Activated CD4-positive, alpha-beta T cell treated with anti-CD3 and anti-CD28 coated beads for 36 hours (primary cell): ENCODE measurements at regions of chr20 and their contacts with region 1.

Region 1: DNA sequence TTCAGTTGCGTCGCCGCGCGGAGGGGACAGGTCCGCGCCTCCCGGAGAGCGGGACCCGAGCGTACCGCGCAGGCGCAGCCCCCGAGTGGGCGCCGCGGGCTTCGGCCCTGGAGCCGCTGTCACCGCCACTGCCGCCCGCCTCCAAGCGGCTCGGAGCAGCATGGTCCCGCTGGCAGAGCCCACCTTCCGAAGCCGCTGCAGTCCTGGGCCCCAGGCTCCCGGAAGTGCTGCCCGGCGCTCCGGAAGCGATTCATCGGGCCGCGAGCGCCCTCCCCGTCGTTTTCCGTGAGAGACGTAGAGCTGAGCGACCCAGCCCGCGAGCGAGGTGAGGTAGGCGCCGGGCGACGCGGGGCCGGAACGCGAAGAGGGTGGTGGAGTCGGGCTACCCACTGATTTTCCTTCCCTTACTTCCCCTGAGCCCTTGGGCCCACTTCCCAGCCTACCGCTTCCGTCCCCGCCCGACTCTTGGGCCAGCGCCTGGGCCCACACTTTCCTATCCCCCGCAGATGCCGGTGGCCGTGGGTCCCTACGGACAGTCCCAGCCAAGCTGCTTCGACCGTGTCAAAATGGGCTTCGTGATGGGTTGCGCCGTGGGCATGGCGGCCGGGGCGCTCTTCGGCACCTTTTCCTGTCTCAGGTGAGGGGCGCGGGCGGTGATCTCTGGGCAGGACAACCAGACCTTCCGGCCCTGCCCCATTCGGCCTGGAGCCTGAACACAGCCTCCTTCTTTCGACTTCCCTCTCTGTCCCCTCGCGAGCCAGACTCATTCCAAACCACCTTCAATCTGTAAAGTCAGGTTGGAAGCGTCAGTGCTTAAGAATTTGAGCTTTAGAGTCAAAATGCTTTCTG is at the starts of genes NFS1 and ROMO1:
- DNase-seq: peak; percentile 94
- ATAC-seq: peak; percentile 92
- H3K4me3 Mint-ChIP-seq: peak within 1 kb of the TSS; percentile 87
- H3K27ac Mint-ChIP-seq: peak within 1 kb of the TSS; percentile 98
- H3K4me1 Mint-ChIP-seq: peaks cover 44% of the 10 kb centered on the region
- H3K27me3 Mint-ChIP-seq: no peaks in the 10 kb centered on the region
- total RNA-seq, gene NFS1: 43.2 to 44.6 TPM
- total RNA-seq, gene ROMO1: 50.4 to 112 TPM

Region 2: GRCh38 chr20:35463455-35464300 is 235.7 kb before region 1 on chr20:
- CTCF ChIA-PET with region 1: no interaction called
- POLR2A ChIA-PET with region 1: no interaction called
- intact Hi-C with region 1: loop called (anchors 2 to 10 kb)
- DNase-seq: peak; percentile 67
- ATAC-seq: peak; percentile 90
- H3K4me3 Mint-ChIP-seq: no peak overlapping the region
- H3K27ac Mint-ChIP-seq: no peak overlapping the region
- H3K4me1 Mint-ChIP-seq: no peaks in the 10 kb centered on the region
- H3K27me3 Mint-ChIP-seq: no peaks in the 10 kb centered on the region

Region 3: GRCh38 chr20:35601008-35601973 is 98.1 kb before region 1 on chr20:
- CTCF ChIA-PET with region 1: interaction called, 3 read pairs
- POLR2A ChIA-PET with region 1: no interaction called
- intact Hi-C with region 1: loop called (anchors 1 to 5 kb)
- DNase-seq: peak; percentile 91
- ATAC-seq: peak; percentile 94
- H3K4me3 Mint-ChIP-seq: peak overlapping the region; percentile 58
- H3K27ac Mint-ChIP-seq: peak overlapping the region; percentile 49
- H3K4me1 Mint-ChIP-seq: peaks cover 5% of the 10 kb centered on the region
- H3K27me3 Mint-ChIP-seq: peaks cover 23% of the 10 kb centered on the region

Region 4: DNA sequence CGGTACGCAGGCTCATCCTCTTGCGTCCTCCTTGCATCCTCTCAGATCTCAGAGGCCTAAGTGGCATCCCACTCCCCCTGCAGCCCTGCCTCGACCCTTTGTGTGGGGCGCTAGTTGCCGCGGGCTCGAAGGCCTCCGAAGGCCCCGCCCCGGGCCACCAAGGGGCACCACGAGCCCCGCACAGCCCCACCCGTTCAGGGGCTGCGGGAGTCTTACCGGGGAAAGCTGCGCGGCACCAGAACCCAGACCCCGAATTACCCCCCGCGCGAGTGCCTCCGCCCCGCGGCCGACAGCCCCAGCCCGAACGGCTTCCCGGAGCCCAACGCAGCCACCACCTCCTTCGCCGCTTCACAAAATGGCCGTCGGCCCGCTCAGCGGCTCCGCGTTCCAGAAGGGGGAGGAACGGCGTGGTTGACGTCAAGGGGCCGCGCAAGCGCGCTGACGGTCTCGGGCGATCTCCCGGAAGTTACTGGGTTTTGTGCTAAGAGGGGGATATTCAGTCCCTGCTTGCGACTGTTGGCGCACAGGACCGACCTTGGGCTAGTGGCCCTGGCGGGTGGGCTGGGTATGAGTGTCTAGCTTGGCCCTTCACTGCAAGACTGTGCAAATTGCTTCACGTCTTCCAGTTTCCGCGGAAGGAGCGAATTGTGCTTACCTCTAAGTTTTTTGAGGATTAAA is 34.7 kb before region 1 on chr20 and contains the starts of genes CPNE1 and RBM12:
- CTCF ChIA-PET with region 1: interaction called, 6 read pairs
- POLR2A ChIA-PET with region 1: interaction called, 6 read pairs
- intact Hi-C with region 1: loop called (anchors 1 to 2 kb)
- DNase-seq: peak; percentile 96
- ATAC-seq: peak; percentile 68
- H3K4me3 Mint-ChIP-seq: peak within 1 kb of the TSS; percentile 80
- H3K27ac Mint-ChIP-seq: peak within 1 kb of the TSS; percentile 100
- H3K4me1 Mint-ChIP-seq: peaks cover 36% of the 10 kb centered on the region
- H3K27me3 Mint-ChIP-seq: no peaks in the 10 kb centered on the region
- total RNA-seq, gene CPNE1: 249 to 258 TPM
- total RNA-seq, gene RBM12: 122 to 148 TPM

Region 5: DNA sequence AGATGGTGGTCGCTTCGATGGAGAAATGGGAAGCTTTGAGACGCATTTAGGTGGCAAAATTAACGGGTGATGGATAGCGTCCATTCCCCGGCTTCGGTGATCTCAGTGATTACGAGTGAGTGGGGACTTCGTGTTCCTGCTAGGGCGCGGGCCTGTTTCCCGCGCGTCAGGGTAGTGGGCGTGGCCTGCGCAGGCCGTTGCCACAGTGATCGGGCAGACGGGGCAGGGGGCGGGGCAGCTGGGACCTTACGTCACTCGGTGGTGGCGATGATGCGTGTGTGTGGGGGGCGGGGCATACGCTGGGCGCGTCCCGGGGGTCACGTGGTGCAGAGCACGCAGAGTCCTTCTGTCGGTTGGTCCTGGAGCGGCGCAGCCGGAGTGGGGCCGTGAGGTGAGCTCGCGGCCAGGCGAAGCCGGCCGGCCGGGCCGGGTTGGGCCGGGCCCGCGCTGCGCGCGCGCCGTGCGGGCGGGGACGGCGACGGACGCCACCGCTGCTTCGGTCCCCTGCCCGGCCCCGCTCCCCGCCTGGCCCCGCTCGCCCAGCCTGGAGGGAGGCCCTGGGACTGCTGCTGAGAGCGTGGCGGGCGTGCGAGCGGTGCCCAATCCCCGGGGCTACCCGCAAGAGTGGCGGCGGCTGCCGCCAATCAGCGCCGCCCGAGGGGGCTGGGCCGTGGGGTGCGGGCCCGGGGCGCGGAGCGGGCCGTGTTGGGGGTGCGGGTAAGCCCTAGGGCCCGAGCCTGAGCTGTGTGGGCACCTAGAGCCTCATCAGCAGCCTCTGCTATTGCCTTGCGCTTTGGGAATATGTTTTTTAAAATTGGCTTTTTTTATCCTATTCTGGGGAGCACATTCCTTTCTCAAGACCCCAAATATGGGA is 72.6 kb after region 1 on chr20 and contains the start of gene PHF20:
- CTCF ChIA-PET with region 1: no interaction called
- POLR2A ChIA-PET with region 1: no interaction called
- intact Hi-C with region 1: loop called in 1 of 2 experiments (anchors 1 kb)
- DNase-seq: peak; percentile 100
- ATAC-seq: peak; percentile 91
- H3K4me3 Mint-ChIP-seq: peak within 1 kb of the TSS; percentile 81
- H3K27ac Mint-ChIP-seq: peak within 1 kb of the TSS; percentile 94
- H3K4me1 Mint-ChIP-seq: peaks cover 76% of the 10 kb centered on the region
- H3K27me3 Mint-ChIP-seq: no peaks in the 10 kb centered on the region
- total RNA-seq, gene PHF20: 54.3 to 61.6 TPM

Region 6: GRCh38 chr20:35883778-35884540 is 184.6 kb after region 1 on chr20:
- CTCF ChIA-PET with region 1: no interaction called
- POLR2A ChIA-PET with region 1: no interaction called
- intact Hi-C with region 1: loop called in 1 of 2 experiments (anchors 10 kb)
- DNase-seq: peak; percentile 76
- ATAC-seq: peak; percentile 93
- H3K4me3 Mint-ChIP-seq: no peak overlapping the region
- H3K27ac Mint-ChIP-seq: peak overlapping the region; percentile 66
- H3K4me1 Mint-ChIP-seq: peaks cover 12% of the 10 kb centered on the region
- H3K27me3 Mint-ChIP-seq: no peaks in the 10 kb centered on the region